ENCODE measurements at regions of chr4 and their contacts with region 1.

Region 1: GRCh38 chr4:85747882-85748491 is 273.0 kb downstream of the ARHGAP24 start:
- DNase-seq: peak; percentile 55
- CTCF ChIP-seq: peak; percentile 79

Region 2: DNA sequence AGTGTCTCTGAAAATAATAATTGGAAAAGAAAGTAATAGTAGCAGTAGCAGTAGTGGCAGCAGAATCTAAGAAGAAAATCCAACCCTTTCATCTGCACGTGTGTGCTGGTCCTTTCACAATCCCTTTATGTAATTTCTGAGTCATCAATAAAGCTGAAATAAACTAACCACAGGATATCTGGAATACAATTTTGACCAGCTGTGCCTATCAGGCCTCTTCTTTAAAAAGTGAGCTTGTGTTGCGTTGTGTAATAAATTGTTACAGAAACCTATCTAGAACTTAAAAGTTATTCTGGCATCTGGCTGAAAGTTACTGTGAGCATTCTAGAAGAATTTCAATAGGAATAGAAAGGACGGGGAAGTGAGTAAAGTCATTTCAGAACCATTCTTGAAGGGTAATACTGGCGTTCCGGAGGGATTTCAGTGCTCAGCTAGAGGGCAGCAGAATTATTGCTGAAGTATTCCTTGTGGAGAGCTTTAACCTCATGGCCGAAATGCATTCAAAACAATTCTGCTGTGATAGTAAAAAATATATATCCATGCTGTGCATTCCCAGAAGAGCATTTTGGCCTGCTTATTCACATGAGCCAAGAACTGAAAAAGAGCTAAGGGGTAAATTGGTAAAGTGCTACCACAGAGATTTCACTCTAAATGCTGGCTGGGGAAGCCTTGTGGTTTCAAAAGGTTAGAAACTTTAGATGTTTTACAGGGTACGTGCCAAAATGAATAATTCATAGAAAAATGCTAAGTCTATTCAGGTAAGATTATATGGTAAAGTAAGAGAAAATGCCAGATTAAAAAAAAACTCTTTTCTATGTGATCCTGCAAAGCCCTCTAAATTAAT is 1509.5 kb before region 1 on chr4:
- CTCF ChIA-PET with region 1: no interaction called
- POLR2A ChIA-PET with region 1: no interaction called
- DNase-seq: no peak
- CTCF ChIP-seq: no peak

Region 3: DNA sequence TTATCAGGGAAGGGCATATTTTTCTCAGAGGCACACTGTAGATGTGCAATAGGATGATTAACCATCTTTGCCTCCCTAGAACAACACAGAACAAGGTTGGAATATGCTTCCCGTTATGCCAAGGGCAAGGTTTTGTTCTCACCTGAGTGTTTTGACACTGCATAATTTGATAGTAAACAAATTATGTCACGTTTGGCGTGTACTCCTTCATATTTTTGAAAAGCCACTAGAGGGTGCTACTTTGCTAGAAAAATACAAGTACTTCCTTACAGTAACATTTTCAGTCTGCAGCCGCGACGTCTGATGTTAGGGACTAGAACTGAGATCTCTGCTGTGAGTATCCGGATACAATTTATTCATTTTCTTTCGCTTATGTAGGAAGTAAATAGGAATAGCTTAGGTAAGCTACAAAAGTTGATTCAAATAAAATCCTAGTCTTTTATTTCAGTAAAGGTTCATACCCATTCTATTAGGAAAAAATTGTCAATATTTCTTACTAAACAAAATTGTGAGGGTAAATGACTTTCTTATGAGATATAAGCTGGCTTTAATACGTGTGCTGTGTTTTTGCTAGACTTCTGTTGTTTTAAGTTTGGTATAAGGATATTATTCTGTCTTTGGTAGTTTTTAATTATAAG is 600.4 kb before region 1 on chr4:
- CTCF ChIA-PET with region 1: interaction called, 23 read pairs
- POLR2A ChIA-PET with region 1: no interaction called
- DNase-seq: peak; percentile 43
- CTCF ChIP-seq: peak; percentile 67

Region 4: DNA sequence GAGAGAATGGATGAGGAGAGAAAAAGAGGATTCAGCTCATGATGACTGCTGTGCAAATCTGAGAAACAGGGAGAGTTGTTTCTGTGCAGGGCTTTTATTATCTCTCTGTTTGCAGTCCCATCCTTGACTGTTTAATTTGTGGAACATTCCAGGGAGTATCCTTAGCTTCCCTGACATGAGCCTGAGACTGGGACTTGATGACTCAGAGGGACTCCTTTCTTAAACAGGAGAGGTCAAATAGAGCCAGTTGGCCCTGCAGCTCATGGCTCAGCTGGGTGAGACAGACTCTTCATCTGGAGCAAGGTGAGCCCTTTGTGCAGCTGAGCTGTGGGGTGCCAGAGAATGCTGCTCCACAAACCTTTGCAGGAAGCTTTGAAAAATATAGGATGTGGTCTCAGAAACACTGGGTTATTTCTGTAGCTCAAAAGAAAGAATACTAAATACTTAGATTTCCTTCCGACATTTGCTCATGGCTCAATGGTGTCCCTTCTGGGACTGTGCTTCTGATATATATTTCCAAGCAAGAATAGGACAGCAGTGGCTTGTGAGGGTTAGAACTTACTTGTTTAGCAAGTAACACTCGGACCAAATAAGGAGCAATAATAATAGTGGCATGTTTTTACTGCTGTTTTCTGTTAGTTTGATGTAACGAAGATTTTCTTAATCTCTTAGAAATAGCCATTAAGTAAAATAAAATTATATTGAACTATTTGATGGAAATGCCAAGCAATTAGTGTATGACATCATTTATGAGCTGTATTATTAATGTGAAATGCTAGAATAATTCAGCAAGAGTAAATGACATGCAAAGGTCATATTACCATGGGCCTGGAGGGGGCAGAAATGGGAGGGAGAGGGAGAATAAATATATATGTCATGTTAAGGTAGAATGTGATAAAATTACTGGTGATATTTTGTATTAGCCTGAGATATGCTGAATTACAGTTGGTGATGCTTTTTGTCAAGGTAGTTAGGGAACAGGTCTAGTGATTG is 258.4 kb before region 1 on chr4:
- CTCF ChIA-PET with region 1: interaction called, 12 read pairs
- POLR2A ChIA-PET with region 1: no interaction called
- DNase-seq: no peak
- CTCF ChIP-seq: no peak

Region 5: DNA sequence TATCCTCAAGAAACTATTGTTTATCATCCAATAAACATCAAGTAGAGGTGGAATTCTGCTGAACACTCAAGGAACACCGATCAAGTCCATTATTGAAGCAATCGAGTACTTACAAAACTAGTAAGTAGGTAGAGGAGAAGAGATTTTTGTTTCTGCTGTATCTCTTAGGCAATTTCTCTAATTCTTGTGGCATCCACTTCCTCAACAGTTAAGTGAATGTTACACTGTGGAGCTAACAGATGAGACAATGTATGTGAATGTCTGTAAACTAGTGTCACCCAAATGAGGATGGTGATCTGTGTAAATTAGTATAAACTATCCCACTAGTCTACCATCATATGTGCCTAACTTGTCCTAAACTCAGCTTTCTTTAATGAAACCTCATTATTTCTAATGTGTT is 11.4 kb before region 1 on chr4:
- CTCF ChIA-PET with region 1: interaction called, 35 read pairs
- POLR2A ChIA-PET with region 1: no interaction called
- DNase-seq: no peak
- CTCF ChIP-seq: no peak

Region 6: GRCh38 chr4:85778632-85779131 is 30.7 kb after region 1 on chr4:
- CTCF ChIA-PET with region 1: interaction called, 15 read pairs
- POLR2A ChIA-PET with region 1: no interaction called
- DNase-seq: peak; percentile 34
- CTCF ChIP-seq: no peak

Region 7: GRCh38 chr4:85860066-85860740 is 112.2 kb after region 1 on chr4:
- CTCF ChIA-PET with region 1: no interaction called
- POLR2A ChIA-PET with region 1: no interaction called
- DNase-seq: no peak
- CTCF ChIP-seq: no peak

Region 8: DNA sequence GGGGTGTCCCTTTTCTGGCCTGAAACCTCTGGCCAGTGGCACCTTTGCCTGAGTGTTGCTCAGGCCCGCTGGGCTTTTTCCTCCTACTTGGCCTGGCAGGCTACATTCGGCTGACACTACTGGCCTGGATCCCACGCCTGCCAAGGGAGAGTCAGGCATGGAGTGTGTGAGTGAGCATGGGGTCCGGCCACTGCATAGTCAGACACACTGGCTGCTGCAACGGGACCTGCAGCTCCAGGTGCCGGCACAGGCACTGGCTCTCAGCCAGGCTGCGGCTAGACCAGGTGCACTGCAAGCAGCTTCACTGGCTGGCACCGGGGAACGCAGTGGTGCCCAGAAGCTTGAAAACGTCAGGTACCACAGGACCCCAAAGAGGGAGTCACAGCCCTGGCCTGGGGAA is 161.9 kb after region 1 on chr4:
- CTCF ChIA-PET with region 1: no interaction called
- POLR2A ChIA-PET with region 1: no interaction called
- DNase-seq: no peak
- CTCF ChIP-seq: no peak

Measured in GM10248 (cell line).